Right ventricle myocardium inferior (tissue), 1 donor: ENCODE measurements at regions of chr17 and their contacts with region 1.

Region 1: DNA sequence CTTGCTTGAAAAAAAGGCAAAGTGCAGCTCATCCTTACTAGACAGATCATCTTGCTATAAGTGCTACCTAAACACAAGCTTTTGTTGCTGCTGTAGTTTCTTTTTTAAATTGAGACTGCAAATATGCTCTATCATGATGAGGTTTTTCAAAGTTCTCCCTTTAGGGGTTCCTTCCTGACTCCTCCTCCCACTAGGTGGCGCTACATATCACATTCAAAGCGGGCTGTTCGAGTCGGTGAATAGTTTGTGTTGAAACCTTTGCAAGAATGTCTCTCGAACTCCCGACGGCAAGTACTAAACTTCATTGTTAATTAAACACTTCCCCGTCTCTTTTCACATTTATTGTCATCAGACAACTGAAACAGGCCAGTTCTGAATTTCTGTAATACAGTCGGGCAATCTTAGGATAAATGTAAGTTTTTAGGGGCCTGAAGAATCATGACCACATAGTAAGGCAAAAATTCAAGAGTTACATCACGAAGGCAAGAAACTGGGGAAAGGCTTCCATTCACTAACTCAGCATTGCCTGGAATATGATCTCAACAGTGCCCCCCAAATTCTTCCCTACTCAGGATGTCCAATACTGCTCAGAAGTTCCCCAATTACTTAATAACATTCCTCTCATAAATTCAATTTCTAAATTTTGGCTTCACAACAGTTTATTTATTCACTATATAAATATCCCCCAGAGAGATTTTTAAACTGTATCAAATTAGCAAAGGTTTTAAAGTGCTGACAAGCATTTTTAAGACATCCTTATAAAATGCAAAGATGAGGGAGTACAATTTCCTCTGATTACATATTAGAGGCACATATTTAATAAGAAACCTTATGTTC is 6.7 kb downstream of the HS3ST3A1 start:
- DNase-seq: no peak
- ATAC-seq: peak; percentile 54

Region 2: DNA sequence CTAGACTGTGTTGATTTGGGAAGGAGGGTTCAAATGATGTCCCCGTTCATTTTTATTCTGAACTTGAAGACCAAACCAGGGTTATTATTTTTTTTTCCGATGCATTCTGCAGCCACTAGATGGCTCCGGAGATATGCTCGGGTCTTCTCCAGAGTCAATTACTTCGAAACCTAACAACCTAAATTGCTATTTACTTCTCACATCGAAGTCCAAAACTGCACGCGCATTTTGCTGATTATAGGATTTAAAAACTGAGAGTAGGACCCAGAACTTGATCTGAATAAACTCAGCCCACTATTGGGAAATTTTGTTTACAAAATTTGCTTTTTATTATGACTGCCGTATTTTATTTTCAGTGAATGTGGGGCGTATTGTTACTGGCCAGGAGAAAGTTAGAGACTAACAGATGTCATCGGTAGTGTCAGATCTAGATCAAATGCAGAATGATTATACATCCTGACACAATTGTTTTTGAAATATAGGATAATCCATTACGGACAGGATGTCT is 257.1 kb before region 1 on chr17:
- intact Hi-C with region 1: loop called (anchors 5 kb)
- DNase-seq: no peak
- ATAC-seq: no peak

Region 3: DNA sequence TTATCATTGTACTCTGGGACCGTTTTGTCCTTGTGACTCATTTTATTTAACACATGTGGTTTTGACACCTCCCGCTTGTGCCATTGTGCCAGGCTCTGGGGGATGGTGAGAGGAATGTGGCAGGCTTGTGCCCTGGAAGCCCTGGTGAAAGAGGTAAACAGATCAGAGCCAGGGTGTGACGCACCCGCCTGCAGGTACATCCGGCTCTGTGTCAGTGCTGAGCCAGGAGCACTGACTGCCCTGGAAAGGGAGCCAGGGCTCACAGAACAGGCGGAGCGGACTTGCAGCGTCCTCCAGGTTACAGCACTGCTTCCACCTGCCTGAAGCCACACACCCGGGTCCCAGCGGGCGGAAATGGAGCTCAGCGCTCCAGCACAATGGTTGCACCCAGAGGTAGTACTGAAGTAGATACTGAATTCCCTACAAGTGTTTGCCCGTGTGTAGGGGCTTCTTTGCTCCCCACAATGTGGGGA is 611.0 kb after region 1 on chr17:
- intact Hi-C with region 1: loop called (anchors 5 kb)
- DNase-seq: peak; percentile 89
- ATAC-seq: peak; percentile 96

Region 4: DNA sequence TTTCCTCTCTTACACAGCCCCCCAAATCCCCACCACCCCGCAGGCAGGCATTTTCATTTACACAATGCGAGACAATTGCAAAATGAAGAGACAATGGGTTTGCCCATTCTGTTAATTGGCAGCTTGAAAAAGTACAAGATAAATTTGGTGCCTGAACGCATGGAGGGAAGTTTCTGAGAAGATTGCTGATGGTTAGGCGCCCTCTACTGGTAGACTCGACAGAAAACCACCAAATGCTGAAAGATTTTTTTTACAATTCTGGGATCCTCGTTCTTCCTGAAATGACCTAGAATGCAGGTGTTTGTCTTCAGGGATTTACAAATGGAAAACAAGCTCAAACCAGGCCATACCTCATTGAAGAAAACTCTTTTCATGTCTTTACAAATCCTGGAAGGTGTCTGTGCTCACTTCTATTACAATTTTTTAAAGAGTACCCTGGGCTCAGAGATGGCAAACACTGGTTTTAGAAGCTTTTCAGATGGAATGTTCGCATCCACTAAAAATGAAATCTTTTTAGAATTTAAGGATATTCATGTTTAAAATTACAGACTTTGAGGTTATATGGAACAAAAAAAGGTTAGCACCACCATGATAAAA is 1331.6 kb after region 1 on chr17:
- intact Hi-C with region 1: loop called (anchors 5 kb)
- DNase-seq: no peak
- ATAC-seq: no peak